ENCODE measurements at regions of chr15 and their contacts with region 1.

Region 1: GRCh38 chr15:90665288-90666134 is 51.6 kb upstream of the BLM start:
- DNase-seq: peak; percentile 27 to 94 (median 66)

Region 2: DNA sequence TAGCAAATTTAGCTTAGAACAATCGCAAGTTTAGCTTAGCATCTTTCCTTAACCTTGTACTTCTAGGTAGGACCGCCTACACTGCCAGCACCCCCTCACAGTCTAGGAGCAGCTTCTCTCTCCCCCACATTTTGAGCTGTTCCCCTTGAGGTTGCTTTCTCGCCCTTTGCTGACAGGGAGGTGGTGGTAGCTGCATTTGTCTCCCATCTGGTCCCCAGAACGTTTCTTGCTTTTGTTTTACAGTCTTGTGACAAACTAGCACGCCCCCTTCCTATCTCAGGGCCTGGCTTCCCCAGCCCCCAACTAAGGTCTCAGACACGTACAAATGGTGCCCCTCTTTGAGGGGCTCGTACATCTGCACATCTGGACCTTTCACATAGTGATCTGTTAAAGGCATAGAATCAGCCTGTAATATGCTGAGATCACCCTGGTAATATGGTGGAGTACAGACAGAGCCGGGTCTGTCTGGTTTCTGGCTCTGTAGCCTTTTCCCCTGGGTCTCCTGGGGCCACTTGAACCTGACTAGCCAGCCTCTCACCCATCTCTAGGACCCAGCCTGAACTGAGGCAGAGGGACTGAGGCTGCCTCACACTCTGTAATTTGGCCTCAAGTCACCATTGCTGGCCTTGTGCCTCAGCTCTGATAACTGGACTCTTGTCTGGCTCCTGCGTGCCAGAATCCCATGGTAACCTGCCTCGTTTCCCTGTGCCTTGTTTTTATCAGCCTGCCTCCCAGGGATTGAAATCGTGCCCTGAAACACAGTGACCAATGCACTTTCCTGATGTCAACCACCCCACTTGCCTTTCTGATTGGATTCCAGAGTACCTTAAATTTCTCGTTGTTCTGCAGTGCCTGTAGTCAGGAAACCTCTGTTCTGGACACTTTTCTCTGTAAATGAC is 108.1 kb before region 1 on chr15:
- intact Hi-C with region 1: no loop called
- DNase-seq: peak in 9 of 10 donors; percentile 41 to 89 (median 59)

Region 3: DNA sequence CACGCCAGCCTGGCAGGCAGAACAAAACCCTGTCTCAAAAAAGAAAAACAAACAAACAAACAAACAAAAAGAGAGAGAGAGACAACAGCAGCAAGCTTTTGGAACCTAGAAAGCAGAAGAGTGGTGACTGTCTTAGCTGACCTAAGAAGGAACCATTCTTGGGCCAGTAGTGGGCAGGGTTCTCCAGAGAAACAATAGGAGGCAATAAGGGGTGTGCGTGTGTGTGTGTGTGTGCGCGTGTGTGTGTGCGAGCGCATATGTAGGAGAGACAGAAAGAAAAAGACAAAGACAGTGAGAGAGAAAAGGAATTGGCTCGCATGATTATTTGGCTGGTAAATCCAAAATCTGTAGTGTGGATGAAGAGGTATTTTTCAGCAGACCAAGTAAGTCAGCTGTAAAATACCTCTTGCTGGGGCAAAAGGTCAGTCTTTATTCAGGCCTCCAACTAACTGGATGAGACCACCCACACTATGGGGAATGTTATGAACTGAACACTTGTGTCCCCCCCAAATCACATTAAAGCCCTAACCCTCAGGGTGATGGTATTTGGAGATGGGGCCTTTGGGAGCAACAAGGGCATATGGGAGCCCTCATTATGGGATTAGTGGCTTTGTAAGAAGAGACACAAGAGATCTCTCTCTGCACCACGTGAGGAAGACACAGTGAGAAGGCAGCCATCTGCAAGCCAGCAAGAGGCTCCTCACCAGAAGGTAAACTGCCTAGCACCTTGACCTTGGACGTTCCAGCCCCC is 36.5 kb after region 1 on chr15:
- intact Hi-C with region 1: no loop called
- DNase-seq: peak in 1 of 10 donors; percentile 44

Region 4: DNA sequence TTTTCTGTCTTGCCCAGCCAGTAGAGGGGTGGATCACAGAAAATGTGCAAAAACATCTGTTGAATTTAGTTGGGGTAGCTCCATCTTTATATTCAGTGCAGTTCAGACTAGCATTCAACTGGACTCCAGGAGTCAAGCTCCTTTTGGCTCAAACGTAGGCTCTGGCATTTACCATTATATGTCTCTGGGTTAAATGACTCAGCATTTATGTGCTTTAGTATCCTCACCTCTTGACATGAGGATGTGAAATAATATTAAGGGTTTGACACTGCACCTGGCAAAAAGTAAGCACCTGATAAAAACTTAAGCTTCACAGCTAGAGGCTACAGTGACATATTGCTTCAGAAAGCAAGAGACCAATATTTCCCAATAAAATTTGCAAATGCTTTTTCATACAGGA is 314.1 kb after region 1 on chr15:
- intact Hi-C with region 1: loop called (anchors 5 kb)
- DNase-seq: no peak